Common myeloid progenitor, CD34-positive (primary cell): ENCODE measurements at regions of chr20 and their contacts with region 1.

Region 1: GRCh38 chr20:34768096-34768495 is 57.4 kb downstream of the NCOA6 start:
- DNase-seq: no peak
- H3K4me3 ChIP-seq: no peak overlapping the region
- H3K27ac ChIP-seq: no peak overlapping the region
- H3K4me1 ChIP-seq: no peaks in the 10 kb centered on the region
- H3K27me3 ChIP-seq: no peaks in the 10 kb centered on the region

Region 2: DNA sequence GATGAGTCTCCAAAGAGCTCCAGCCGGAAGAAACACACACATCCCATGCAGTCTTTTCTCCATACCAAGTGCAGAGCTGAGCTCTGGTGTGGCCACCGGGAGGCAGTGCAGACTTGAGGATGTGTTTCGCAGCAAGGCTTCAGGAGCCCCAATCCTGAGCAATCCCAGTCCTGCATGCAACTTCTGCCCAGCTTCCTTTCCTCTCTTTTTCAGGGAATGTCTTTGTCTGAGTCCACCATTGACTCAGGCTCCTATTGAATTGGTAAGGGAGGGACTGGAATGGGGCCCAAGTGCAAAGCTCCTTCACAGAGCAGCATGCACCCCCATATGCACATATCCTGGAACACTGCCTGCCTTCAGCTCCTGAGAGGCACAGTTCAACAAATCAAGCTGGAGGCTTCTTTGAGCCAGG is 577.4 kb before region 1 on chr20:
- CTCF ChIA-PET with region 1: interaction called, 10 read pairs
- POLR2A ChIA-PET with region 1: no interaction called
- DNase-seq: peak; percentile 54 to 63 (median 56)
- H3K4me3 ChIP-seq: no peak overlapping the region
- H3K27ac ChIP-seq: no peak overlapping the region
- H3K4me1 ChIP-seq: no peaks in the 10 kb centered on the region
- H3K27me3 ChIP-seq: peaks cover 0 to 9% (median 3%) of the 10 kb centered on the region in 5 experiments

Region 3: GRCh38 chr20:34573541-34574300 is 194.4 kb before region 1 on chr20:
- CTCF ChIA-PET with region 1: no interaction called
- POLR2A ChIA-PET with region 1: interaction called, 10 read pairs
- DNase-seq: no peak
- H3K4me3 ChIP-seq: no peak overlapping the region
- H3K27ac ChIP-seq: no peak overlapping the region
- H3K4me1 ChIP-seq: peaks cover 3 to 13% (median 9%) of the 10 kb centered on the region in 4 experiments
- H3K27me3 ChIP-seq: no peaks in the 10 kb centered on the region